GM12878 (cell line): ENCODE measurements at regions of chr1 and their contacts with region 1.

Region 1: DNA sequence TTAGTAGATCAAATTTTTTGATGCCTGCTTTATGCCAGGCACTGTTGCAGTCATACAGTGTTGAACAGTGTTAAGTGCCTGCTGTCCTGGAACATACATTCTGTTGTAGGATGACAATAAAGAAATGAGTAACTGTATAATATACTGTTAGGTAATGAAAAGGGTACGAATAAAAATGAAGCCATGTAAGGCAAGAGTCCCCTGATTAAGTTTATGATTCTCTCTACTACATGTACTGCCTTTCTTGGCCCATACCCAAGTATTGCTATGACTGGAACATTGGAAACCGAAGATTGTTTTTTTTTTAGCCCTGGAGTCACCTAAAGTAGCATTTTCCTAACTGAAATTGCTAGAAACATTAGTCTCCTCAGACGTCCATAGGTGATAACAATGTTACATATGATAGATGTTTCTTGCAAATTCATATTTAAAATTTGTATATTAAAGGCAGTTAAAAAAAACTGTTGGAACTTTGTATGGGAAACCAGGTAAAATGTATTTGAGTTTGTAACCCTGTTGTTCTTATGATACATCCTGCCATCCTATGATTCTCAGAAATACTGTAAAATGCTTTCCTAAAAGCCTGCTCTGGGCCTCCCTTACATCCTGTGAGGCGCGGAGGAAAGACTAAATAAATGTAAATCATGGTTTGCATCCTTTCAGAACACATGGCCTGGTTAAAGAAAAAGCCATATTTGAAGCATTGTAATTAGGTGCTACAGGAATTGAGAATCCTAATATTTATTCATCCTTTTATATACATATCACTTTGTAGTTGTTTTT is 5.8 kb downstream of the ATP5PB start:
- DNase-seq: peak; percentile 24
- ATAC-seq: peak; percentile 77
- H3K4me3 ChIP-seq: peak overlapping the region; percentile 32
- H3K27ac ChIP-seq: peak overlapping the region; percentile 59
- H3K4me1 ChIP-seq: peaks cover 12% of the 10 kb centered on the region; the same call in 1 of the 2 replicates
- H3K27me3 ChIP-seq: no peaks in the 10 kb centered on the region
- CTCF ChIP-seq: no peak
- EP300 ChIP-seq: no peak
- POLR2A ChIP-seq: no peak
- RAD21 ChIP-seq: no peak

Region 2: GRCh38 chr1:111441573-111442192 is 13.4 kb before region 1 on chr1:
- CTCF ChIA-PET with region 1: interaction called, 32 read pairs
- POLR2A ChIA-PET with region 1: interaction called, 3 read pairs
- RAD21 ChIA-PET with region 1: no interaction called
- SMC1A ChIA-PET with region 1: interaction called, 3 read pairs
- in situ Hi-C with region 1: no loop called
- intact Hi-C with region 1: no loop called
- DNase-seq: no peak
- ATAC-seq: peak; percentile 81
- H3K4me3 ChIP-seq: no peak overlapping the region
- H3K27ac ChIP-seq: no peak overlapping the region
- H3K4me1 ChIP-seq: peaks cover 10% of the 10 kb centered on the region
- H3K27me3 ChIP-seq: no peaks in the 10 kb centered on the region
- CTCF ChIP-seq: peak; percentile 55 to 65 (median 56)
- EP300 ChIP-seq: no peak
- POLR2A ChIP-seq: no peak
- RAD21 ChIP-seq: peak; percentile 52

Region 3: GRCh38 chr1:111467865-111468711 is 13.0 kb after region 1 on chr1:
- CTCF ChIA-PET with region 1: interaction called, 6 read pairs
- POLR2A ChIA-PET with region 1: no interaction called
- RAD21 ChIA-PET with region 1: no interaction called
- SMC1A ChIA-PET with region 1: interaction called, 11 read pairs
- in situ Hi-C with region 1: no loop called
- intact Hi-C with region 1: loop called (anchors 2 kb)
- DNase-seq: no peak
- ATAC-seq: no peak
- H3K4me3 ChIP-seq: no peak overlapping the region
- H3K27ac ChIP-seq: no peak overlapping the region
- H3K4me1 ChIP-seq: peaks cover 12% of the 10 kb centered on the region
- H3K27me3 ChIP-seq: no peaks in the 10 kb centered on the region
- CTCF ChIP-seq: 0 out of 6 replicates have a peak, but pooled peaks of 1 of the 3 experiments have one; percentile 3
- EP300 ChIP-seq: no peak
- POLR2A ChIP-seq: no peak
- RAD21 ChIP-seq: no peak

Region 4: DNA sequence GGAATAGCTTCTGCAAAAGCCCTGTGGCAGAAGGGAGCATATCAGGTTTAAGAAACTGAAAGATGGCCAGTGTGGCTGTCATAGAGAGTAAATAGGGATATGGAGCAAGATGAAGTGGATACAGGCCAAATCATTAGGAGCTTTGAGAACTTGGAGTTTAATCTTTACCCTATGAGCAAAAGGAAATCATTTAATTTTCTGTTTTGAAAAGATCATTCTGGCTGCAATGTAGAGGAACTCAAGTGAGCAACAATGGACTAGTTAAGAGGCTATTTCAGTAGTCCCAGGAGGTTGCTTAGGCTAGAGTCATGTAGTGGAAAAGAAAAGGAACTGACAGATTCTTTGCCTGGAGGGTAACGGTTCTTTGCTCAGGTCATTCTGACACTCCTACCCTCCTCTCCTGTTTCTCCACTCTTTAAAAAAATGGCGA is 211.8 kb after region 1 on chr1:
- CTCF ChIA-PET with region 1: no interaction called
- POLR2A ChIA-PET with region 1: no interaction called
- RAD21 ChIA-PET with region 1: no interaction called
- SMC1A ChIA-PET with region 1: no interaction called
- in situ Hi-C with region 1: no loop called
- intact Hi-C with region 1: no loop called
- DNase-seq: no peak
- ATAC-seq: no peak
- H3K4me3 ChIP-seq: no peak overlapping the region
- H3K27ac ChIP-seq: no peak overlapping the region
- H3K4me1 ChIP-seq: peaks cover 12% of the 10 kb centered on the region
- H3K27me3 ChIP-seq: no peaks in the 10 kb centered on the region
- CTCF ChIP-seq: no peak
- EP300 ChIP-seq: no peak
- POLR2A ChIP-seq: no peak
- RAD21 ChIP-seq: no peak